Cardiac septum (tissue), 1 donor: ENCODE measurements at regions of chr13 and their contacts with region 1.

Region 1: GRCh38 chr13:95296326-95296925 is 4.8 kb downstream of the ABCC4 start:
- DNase-seq: no peak

Region 2: DNA sequence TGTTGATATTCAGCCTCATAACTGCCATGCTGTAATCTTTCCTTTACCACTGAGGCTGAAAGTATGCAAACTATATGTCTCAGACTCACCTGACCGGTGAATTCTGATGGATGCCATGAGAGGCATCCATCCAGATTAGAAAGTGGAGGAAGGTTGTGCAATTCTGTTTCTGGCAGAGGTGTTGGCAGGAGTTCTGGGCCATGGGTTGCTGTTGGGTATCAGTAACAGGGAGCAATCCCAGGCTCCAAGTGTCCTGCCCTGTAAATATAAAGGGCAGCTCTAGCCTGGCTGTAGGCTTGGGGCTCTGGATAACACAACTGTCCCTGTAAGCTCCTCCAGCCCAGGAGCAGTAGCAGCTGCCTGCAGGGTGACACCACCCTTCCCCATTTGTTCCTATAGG is 82.2 kb after region 1 on chr13:
- intact Hi-C with region 1: loop called (anchors 1 kb)
- DNase-seq: no peak